Activated B cell treated with CpG ODN at 0.5 μM for 24 hours (primary cell): ENCODE measurements at regions of chr17 and their contacts with region 1.

Region 1: GRCh38 chr17:49677933-49678847 is at the start of gene SPOP:
- DNase-seq: peak; percentile 95
- ATAC-seq: peak; percentile 91
- H3K4me3 Mint-ChIP-seq: peak within 1 kb of the TSS; percentile 98
- H3K27ac Mint-ChIP-seq: peak within 1 kb of the TSS; percentile 99
- H3K4me1 Mint-ChIP-seq: peaks cover 43% of the 10 kb centered on the region
- H3K27me3 Mint-ChIP-seq: peaks cover 3% of the 10 kb centered on the region
- CTCF ChIP-seq: no peak
- total RNA-seq, gene SPOP: 57.4 and 65.8 TPM in 2 replicates

Region 2: GRCh38 chr17:48543107-48543853 is 1134.9 kb before region 1 on chr17:
- CTCF ChIA-PET with region 1: no interaction called
- POLR2A ChIA-PET with region 1: no interaction called
- intact Hi-C with region 1: loop called (anchors 5 kb)
- DNase-seq: peak; percentile 63
- ATAC-seq: peak; percentile 59
- H3K4me3 Mint-ChIP-seq: peak overlapping the region; percentile 89
- H3K27ac Mint-ChIP-seq: peak overlapping the region; percentile 82
- H3K4me1 Mint-ChIP-seq: peaks cover 38% of the 10 kb centered on the region
- H3K27me3 Mint-ChIP-seq: peaks cover 35% of the 10 kb centered on the region
- CTCF ChIP-seq: no peak

Region 3: DNA sequence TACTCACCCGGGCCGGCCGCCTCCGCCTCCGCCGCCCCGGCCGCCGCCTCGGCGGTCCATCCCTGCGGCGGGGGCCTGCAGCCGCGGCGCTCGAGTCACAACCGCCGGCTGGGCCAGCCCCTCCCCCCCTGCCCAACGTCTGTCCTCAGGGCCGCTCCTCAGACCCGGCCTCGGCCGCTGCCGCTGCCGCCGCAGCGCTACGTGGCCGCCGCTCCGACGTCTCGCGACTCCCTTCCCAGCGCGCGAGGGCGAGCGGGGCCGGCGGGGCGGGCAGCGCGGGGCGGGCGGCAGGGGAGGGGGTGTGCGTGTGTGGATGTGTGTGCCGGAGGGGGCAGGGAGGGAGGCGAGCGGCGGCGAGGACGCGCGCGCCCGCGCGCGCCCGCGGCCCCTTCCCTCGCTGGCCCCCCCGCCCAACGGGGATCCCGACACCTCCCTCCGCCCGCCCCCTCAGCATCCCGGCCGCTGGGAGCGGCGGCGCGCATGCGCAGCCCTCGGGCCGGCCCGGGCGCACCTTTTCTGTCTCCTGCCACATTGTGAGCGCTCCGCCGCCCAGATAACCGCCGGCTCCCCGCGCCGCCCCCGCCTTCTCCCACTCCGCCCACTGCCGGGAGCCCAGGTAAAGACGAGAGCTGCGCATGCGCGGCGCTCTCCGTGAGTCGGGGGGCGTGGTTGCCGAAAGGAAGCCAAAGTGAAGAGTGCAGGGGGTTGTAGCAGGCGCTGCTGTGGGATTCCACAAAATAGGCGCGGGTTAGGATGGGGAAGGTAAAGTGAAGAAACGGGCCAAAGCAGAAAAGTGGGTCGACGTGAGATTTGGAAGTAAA is 316.1 kb before region 1 on chr17 and contains the start of gene ZNF652:
- CTCF ChIA-PET with region 1: no interaction called
- POLR2A ChIA-PET with region 1: no interaction called
- intact Hi-C with region 1: loop called (anchors 2 kb)
- DNase-seq: peak; percentile 95
- ATAC-seq: peak; percentile 69
- H3K4me3 Mint-ChIP-seq: peak within 1 kb of the TSS; percentile 96
- H3K27ac Mint-ChIP-seq: peak within 1 kb of the TSS; percentile 96
- H3K4me1 Mint-ChIP-seq: peaks cover 61% of the 10 kb centered on the region
- H3K27me3 Mint-ChIP-seq: no peaks in the 10 kb centered on the region
- CTCF ChIP-seq: no peak
- total RNA-seq, gene ZNF652: 37.1 and 40.6 TPM in 2 replicates

Region 4: GRCh38 chr17:49496183-49496866 is 181.9 kb before region 1 on chr17:
- CTCF ChIA-PET with region 1: no interaction called
- POLR2A ChIA-PET with region 1: no interaction called
- intact Hi-C with region 1: loop called (anchors 1 kb)
- DNase-seq: peak; percentile 86
- ATAC-seq: peak; percentile 73
- H3K4me3 Mint-ChIP-seq: peak overlapping the region; percentile 81
- H3K27ac Mint-ChIP-seq: no peak overlapping the region
- H3K4me1 Mint-ChIP-seq: peaks cover 34% of the 10 kb centered on the region
- H3K27me3 Mint-ChIP-seq: peaks cover 33% of the 10 kb centered on the region
- CTCF ChIP-seq: peak; percentile 22

Region 5: DNA sequence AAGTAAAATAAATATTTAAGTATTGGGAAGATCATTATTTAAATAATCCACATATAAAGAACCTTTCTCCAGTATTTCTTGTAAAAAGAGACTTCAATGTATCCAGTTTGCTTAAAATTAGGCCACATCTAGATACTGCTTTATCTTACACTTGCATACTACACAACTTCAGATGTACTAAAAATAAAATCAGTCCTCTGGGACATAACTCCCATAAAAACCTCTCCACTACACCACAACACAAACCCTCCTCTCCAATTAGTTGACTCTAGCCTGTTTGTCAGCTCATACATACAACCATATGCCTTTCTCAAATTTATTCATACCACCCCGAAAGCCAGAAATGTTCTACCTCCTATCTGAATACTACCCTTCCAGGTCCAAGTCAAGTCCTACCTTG is 21.9 kb before region 1 on chr17:
- CTCF ChIA-PET with region 1: no interaction called
- POLR2A ChIA-PET with region 1: no interaction called
- intact Hi-C with region 1: no loop called
- DNase-seq: no peak
- ATAC-seq: no peak
- H3K4me3 Mint-ChIP-seq: no peak overlapping the region
- H3K27ac Mint-ChIP-seq: no peak overlapping the region
- H3K4me1 Mint-ChIP-seq: peaks cover 43% of the 10 kb centered on the region
- H3K27me3 Mint-ChIP-seq: no peaks in the 10 kb centered on the region
- CTCF ChIP-seq: no peak

Region 6: DNA sequence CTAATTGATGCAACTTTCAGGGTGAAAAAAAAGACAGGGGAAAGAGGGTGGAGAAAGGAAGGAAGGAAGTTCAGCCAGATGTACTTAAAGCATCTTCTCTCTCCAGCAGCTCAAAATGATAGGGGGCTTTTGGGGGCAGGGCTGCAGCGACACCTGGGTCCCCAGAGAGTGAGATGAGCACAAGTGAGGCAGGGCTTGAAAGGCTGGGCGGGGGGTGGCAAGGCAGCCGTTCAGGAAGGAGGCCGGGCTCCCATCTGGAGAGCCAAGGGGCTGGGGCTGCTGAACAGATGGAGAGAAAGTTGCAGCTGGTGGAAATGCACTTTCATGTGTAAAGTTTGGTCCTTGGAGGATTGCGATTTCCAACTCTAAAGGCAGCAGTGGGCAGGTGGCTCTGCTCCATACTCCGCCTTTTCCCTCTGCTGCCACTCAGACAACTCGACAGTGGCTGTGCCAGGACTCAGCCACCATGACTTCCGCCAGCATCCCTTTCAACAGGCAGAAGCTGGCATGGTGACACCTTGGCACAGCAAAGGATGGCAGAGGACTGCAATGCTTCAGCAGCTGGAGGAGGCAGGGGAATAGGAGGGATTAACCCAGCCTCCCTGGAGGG is 21.9 kb after region 1 on chr17:
- CTCF ChIA-PET with region 1: interaction called, 3 read pairs
- POLR2A ChIA-PET with region 1: interaction called, 11 read pairs
- intact Hi-C with region 1: loop called (anchors 1 kb)
- DNase-seq: no peak
- ATAC-seq: no peak
- H3K4me3 Mint-ChIP-seq: no peak overlapping the region
- H3K27ac Mint-ChIP-seq: peak overlapping the region; percentile 8
- H3K4me1 Mint-ChIP-seq: peaks cover 16% of the 10 kb centered on the region
- H3K27me3 Mint-ChIP-seq: no peaks in the 10 kb centered on the region
- CTCF ChIP-seq: no peak

Region 7: DNA sequence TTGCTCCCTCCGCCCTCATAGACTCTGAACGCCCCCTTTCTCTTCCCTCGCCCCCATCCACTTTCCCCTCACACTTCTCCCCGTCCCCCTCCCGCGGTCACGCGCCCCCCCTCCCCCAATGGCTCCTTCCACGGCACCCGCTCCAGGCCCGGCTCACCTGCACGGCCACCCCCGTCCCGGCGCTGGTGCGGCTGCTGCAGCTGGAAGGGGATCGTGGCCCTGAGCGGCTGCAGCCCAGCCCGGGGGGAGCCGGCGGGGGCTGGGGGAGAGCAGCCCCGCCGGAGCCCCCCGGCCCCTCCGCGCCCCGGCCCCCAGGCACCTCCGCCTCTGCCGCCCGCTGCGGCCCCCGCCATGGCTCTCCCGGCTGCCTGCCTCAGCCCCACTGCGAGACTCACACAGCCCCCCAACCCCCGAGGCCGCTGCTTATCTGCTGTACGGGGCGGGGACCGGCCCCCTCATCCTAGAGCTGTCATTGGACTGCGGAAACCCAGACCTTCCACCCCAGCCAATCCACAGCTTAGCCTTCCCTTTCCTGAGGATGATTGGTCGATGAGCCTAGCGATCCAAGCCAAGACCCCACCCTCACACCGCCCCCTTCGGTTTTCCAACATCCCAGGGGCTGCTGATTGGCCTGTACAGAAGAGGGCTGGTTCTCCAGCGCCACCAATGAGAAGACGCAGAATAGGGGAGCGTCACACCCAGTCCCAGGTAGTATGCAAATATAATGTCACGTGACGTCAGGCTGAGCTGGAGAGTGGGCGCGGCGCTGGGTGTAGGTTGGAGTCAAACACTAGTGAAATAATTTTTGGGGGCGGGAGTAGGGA is 85.8 kb after region 1 on chr17 and contains the start of gene FAM117A:
- CTCF ChIA-PET with region 1: no interaction called
- POLR2A ChIA-PET with region 1: interaction called, 13 read pairs
- intact Hi-C with region 1: loop called (anchors 1 kb)
- DNase-seq: peak; percentile 83
- ATAC-seq: peak; percentile 92
- H3K4me3 Mint-ChIP-seq: peak within 1 kb of the TSS; percentile 94
- H3K27ac Mint-ChIP-seq: peak within 1 kb of the TSS; percentile 79
- H3K4me1 Mint-ChIP-seq: peaks cover 57% of the 10 kb centered on the region
- H3K27me3 Mint-ChIP-seq: no peaks in the 10 kb centered on the region
- CTCF ChIP-seq: no peak
- total RNA-seq, gene FAM117A: 27.7 and 30.0 TPM in 2 replicates

Region 8: GRCh38 chr17:50094753-50095619 is 416.8 kb after region 1 on chr17 and contains the start of gene PDK2:
- CTCF ChIA-PET with region 1: no interaction called
- POLR2A ChIA-PET with region 1: no interaction called
- intact Hi-C with region 1: loop called (anchors 10 kb)
- DNase-seq: peak; percentile 93
- ATAC-seq: peak; percentile 91
- H3K4me3 Mint-ChIP-seq: peak within 1 kb of the TSS; percentile 96
- H3K27ac Mint-ChIP-seq: peak within 1 kb of the TSS; percentile 94
- H3K4me1 Mint-ChIP-seq: peaks cover 26% of the 10 kb centered on the region
- H3K27me3 Mint-ChIP-seq: no peaks in the 10 kb centered on the region
- CTCF ChIP-seq: no peak
- total RNA-seq, gene PDK2: 15.9 and 16.2 TPM in 2 replicates